Dendritic cell treated with granulocyte-macrophage colony-stimulating factor and Interleukin-4, amounts not matched to agents 40 ng/mL and 50 ng/mL, for 4 days (primary cell): ENCODE measurements at regions of chr12 and their contacts with region 1.

Region 1: GRCh38 chr12:49707128-49707811 is at the start of gene FMNL3:
- H3K4me3 Mint-ChIP-seq: peak within 1 kb of the TSS; percentile 99
- H3K27ac Mint-ChIP-seq: peak within 1 kb of the TSS; percentile 94
- H3K4me1 Mint-ChIP-seq: peaks cover 58% of the 10 kb centered on the region
- H3K27me3 Mint-ChIP-seq: peaks cover 29% of the 10 kb centered on the region

Region 2: GRCh38 chr12:49567611-49568441 is 139.4 kb before region 1 on chr12 and contains the start of gene MCRS1:
- intact Hi-C with region 1: loop called (anchors 5 kb)
- H3K4me3 Mint-ChIP-seq: peak within 1 kb of the TSS; percentile 95
- H3K27ac Mint-ChIP-seq: peak within 1 kb of the TSS; percentile 96
- H3K4me1 Mint-ChIP-seq: peaks cover 47% of the 10 kb centered on the region
- H3K27me3 Mint-ChIP-seq: no peaks in the 10 kb centered on the region

Region 3: GRCh38 chr12:49644620-49644994 is 62.7 kb before region 1 on chr12:
- intact Hi-C with region 1: loop called (anchors 1 kb)
- H3K4me3 Mint-ChIP-seq: no peak overlapping the region
- H3K27ac Mint-ChIP-seq: no peak overlapping the region
- H3K4me1 Mint-ChIP-seq: peaks cover 38% of the 10 kb centered on the region
- H3K27me3 Mint-ChIP-seq: no peaks in the 10 kb centered on the region

Region 4: GRCh38 chr12:49671031-49671765 is 36.1 kb before region 1 on chr12:
- intact Hi-C with region 1: loop called (anchors 2 kb)
- H3K4me3 Mint-ChIP-seq: no peak overlapping the region
- H3K27ac Mint-ChIP-seq: peak overlapping the region; percentile 81
- H3K4me1 Mint-ChIP-seq: peaks cover 85% of the 10 kb centered on the region
- H3K27me3 Mint-ChIP-seq: no peaks in the 10 kb centered on the region

Region 5: DNA sequence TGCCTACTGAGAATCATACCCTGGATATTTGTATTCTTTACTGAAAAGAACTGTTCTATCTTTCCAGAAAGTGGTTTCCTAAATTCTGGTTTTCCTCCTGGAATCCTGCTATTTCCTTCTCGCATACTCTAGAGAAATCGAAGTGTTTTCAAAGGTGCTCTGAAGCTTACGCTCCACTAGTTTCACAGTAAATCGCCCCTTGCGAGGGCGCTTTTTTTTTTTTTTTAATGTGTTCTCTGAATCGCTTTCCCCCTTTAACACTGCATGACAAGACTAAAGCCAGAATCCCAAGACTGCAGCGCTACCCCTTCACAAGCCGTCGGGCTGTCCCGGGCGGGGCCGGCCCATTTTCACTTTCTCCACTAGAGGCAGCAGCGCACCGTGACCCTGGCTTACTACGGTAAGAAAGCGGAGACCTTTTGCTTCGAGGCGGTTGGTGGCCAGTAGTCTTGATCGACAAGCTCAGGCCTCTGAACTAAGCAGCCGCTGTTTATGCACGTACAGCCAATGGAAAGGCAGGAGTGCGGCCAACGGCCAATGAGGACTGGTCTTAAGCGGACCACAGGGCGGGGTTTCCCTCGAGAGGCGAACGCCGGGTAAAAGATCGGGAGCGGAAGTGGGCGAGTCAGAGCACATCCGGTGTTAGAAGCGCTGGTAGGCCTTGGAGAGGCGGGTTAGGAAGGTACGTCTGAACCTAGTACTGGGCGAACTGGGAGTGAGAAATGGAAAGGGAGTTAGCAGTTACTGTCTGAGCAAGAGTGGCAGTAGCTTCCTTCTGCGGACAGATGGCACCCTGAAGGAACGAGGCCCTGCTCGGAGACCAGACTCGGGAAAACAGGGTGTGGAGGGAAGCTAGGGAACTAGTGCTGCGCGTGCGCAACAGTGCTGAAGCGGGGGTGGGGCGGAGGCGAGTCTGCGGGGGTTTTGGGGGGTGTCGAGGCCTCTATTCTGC is 33.9 kb after region 1 on chr12 and contains the start of gene TMBIM6:
- intact Hi-C with region 1: loop called (anchors 2 kb)
- H3K4me3 Mint-ChIP-seq: peak within 1 kb of the TSS; percentile 84
- H3K27ac Mint-ChIP-seq: peak within 1 kb of the TSS; percentile 96
- H3K4me1 Mint-ChIP-seq: peaks cover 36% of the 10 kb centered on the region
- H3K27me3 Mint-ChIP-seq: no peaks in the 10 kb centered on the region

Region 6: DNA sequence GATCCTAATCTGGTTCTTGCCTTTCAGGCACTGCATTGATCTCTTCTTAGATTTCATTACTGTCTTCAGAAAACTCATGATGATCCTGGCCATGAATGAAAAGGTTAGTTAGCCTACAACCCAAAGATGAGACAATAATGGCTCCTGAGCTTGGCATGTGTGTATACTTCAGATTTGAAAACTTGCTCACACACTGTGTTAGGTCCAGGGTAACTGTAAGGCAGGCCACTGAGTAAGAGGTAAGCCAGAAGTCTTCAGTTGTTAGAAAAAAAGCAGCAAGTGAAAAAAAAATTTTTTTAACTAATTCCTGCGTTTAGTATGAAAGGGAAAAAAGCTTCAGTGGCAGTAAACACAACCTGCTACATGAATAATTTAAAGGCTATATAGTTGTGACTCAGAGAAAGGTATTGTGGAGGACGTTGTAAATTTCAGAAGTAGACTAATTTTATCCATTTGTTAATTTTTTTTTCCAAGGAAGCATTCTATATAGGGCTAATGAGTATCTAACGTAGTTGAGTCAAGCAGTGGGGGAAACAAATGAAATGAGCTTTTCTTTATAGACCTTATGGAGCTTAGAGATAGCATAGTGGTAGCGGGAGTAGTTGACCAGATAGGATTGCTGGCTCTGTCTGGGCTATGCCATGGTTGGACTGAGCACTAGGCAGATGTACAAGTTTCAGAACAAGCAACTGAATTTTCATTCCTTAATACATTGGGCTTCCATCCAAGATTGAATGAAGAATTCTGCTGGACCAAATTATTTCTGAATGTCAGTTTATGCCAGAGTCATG is 54.6 kb after region 1 on chr12:
- intact Hi-C with region 1: no loop called
- H3K4me3 Mint-ChIP-seq: no peak overlapping the region
- H3K27ac Mint-ChIP-seq: peak overlapping the region; percentile 72
- H3K4me1 Mint-ChIP-seq: peaks cover 32% of the 10 kb centered on the region
- H3K27me3 Mint-ChIP-seq: no peaks in the 10 kb centered on the region

Region 7: DNA sequence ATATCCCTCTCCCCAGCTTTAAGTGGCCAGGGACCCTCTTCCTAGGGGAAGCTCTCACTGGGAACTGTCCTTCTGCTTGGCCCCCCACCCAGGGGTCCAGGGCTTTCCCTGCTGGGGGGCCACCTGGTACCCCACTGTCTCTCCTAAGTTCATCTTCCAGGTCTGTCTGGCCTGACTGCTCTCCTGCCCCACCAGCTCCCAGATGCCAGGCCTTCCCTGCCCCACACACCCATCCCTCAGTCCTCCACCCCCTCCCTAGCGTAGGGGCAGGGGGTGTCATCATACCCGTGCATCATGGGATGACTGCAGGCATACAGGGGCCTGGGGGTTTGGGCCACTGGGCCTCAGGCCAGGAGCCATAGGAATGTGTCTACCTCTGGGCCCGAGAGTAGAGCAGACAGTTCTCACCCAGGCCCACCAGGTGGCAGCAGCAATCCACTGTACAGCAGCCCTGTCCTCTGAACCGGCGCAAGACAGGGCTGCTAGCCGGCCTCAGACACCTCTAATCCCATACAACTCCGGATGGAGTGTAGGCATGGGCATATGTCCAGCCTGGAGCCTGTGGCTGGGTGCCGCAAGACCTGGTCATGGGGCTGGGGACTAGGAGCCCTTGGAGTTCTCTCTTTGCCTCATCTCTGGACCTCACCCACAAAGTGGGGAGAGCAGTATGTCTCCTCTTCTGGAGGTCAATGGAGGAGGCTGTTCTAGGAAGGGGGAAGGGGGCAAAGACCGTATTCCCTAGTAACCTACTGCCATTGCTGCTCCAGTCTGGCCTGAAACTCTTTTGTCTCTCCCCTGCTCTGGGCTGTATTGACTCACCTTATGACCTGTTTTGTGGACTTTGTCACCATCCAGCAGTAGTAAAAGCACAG is 367.9 kb after region 1 on chr12:
- intact Hi-C with region 1: no loop called
- H3K4me3 Mint-ChIP-seq: no peak overlapping the region
- H3K27ac Mint-ChIP-seq: no peak overlapping the region
- H3K4me1 Mint-ChIP-seq: peaks cover 9% of the 10 kb centered on the region
- H3K27me3 Mint-ChIP-seq: peaks cover 39% of the 10 kb centered on the region